ENCODE measurements at regions of chr1 and their contacts with region 1.

Region 1: GRCh38 chr1:44835738-44836675 is 7.0 kb downstream of the PTCH2 start:
- DNase-seq: no peak
- H3K4me3 ChIP-seq: peak overlapping the region in 1 of 4 donors; percentile 8
- H3K27ac ChIP-seq: peak overlapping the region in 1 of 4 donors; percentile 5
- H3K4me1 ChIP-seq: peaks cover 0 to 8% (median 8%) of the 10 kb centered on the region in 4 donors
- H3K27me3 ChIP-seq: no peaks in the 10 kb centered on the region
- CTCF ChIP-seq: peak; percentile 75 to 89 (median 81)
- EP300 ChIP-seq: no peak
- POLR2A ChIP-seq: no peak

Region 2: DNA sequence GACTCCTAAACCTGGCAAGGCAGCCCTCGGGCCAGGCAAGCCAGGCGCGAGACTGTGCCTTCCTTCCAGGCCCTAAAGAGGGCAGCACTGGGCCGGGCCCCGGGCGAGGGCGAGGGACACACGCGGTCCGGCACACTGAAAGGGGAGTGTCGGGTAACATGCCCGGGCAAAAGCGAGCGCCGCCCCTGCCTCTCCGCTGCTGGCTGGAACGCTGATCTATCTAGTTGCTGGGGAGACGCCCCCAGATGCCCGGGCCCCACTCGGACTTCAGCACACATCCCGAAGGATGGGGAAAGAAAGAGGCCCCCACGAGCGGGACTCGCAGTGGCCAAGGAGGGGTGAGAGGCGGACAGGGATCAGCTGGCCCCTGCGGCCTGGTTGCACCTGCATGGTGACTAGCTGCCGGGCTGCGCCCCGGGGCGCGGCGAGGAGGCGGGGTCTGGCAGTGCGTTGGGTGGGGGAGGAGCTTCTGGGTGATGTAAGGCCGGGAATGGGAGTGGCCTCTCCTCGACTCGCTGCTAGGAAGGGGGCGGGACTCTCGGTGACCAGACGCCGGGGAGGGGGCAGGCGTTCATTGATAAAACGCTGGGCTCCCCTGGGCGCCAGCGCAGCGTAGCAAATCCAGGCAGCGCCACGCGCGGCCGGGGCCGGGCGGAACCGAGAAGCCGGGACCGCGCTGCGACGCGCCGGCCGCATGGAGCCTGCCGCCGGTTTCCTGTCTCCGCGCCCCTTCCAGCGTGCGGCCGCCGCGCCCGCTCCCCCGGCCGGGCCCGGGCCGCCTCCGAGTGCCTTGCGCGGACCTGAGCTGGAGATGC is 36.0 kb before region 1 on chr1 and contains the start of gene PLK3:
- intact Hi-C with region 1: loop called (anchors 5 kb)
- DNase-seq: peak; percentile 99
- H3K4me3 ChIP-seq: peak within 1 kb of the TSS; percentile 81 to 95 (median 92)
- H3K27ac ChIP-seq: peak within 1 kb of the TSS; percentile 92 to 97 (median 94)
- H3K4me1 ChIP-seq: peaks cover 29 to 56% (median 44%) of the 10 kb centered on the region in 4 donors
- H3K27me3 ChIP-seq: no peaks in the 10 kb centered on the region
- CTCF ChIP-seq: peak; percentile 83 to 95 (median 91)
- EP300 ChIP-seq: no peak
- POLR2A ChIP-seq: peak; percentile 55
- total RNA-seq, gene PLK3: 7.9 to 46.4 (median 10.5) TPM

Region 3: DNA sequence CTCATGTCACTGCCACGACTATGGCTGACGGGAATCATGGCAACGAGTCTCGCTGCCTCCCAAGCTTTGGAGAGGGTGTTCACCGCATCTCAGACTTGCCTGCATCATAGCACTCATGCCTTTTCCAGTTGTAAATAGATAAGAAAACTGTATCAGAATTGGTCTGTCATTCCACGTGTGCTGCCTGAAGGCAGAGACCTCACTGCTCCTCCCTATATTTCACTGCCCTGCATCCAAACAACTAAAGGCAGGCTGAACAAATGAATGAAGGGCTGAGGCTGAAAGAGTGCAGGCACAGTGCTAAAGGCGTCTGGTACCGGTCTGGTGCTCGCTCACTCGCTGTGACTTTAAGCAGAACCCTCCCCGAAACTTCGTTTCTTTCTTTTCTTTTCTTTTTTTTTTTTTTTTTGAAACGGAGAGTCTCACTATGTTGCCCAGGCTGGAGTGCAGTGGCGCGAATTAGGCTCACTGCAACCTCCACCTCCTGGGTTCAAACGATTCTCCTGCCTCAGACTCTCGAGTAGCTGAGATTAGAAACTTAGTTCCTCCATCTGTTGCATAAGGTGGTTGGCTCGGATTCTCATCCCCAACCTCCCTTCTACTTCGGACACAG is 149.8 kb after region 1 on chr1:
- intact Hi-C with region 1: loop called (anchors 10 kb)
- DNase-seq: no peak
- H3K4me3 ChIP-seq: peak overlapping the region; percentile 63 to 81 (median 74)
- H3K27ac ChIP-seq: peak overlapping the region; percentile 66 to 79 (median 71)
- H3K4me1 ChIP-seq: peaks cover 14 to 34% (median 23%) of the 10 kb centered on the region in 4 donors
- H3K27me3 ChIP-seq: no peaks in the 10 kb centered on the region
- CTCF ChIP-seq: no peak
- EP300 ChIP-seq: no peak
- POLR2A ChIP-seq: no peak

Measured in esophagus muscularis mucosa (tissue), 4 donors.